ENCODE measurements at regions of chr3 and their contacts with region 1.

Region 1: DNA sequence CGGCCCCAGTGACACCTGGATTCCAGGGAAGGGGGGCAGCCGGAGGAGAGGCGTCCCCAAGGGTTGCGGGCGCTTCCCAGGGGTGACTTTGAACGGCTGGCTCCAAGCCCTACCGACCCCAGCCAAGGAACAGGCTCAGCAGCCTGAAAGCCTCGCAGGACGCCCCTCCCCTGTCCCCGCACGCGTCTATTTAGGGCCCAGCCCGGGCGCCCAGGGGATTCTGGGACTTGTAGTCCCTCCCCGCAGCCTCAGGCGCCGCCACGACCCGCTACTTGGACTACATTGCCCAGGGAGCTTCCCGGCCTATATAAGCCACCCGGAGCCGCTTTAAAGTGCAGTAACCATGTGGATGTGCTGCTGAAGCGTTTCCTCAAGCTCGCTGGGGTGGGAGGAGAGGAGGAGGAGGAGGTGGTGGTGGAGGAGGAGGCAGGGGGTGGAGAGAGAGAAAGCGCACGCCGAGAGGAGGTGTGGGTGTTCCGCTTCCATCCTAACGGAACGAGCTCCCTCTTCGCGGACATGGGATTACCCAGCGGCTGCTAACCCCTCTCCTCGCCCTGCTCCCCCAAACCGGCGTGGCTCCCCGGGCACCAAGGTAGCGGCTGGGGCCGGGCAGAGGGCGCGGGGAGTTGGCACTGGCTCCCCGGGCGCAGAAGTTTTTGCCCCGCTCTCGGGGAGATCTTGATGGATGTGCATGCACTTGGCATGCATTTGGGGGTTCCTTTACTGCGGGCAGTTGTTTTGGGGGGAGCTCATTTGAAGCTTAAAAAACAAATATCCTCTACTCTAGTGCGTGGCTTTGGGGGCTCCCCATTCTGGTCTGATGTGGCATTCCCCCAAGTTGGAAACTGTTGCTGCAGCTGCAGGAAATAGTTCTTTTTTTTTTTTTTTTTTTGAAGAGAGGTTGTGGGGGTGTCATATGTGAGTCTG is at the start of gene ITPR1:
- DNase-seq: peak; percentile 98 to 99
- H3K4me3 ChIP-seq: peak within 1 kb of the TSS; percentile 62 to 88 (median 72)
- H3K27ac ChIP-seq: peak within 1 kb of the TSS; percentile 56; the same call in 1 of the 2 replicates
- H3K4me1 ChIP-seq: peaks cover 0 to 3% (median 0%) of the 10 kb centered on the region in 4 experiments; a peak in 3 of 7 replicates
- H3K27me3 ChIP-seq: peaks cover 0 to 11% (median 5%) of the 10 kb centered on the region in 4 experiments; a peak in 5 of 7 replicates
- CTCF ChIP-seq: no peak
- EP300 ChIP-seq: no peak
- POLR2A ChIP-seq: peak; percentile 100
- RAD21 ChIP-seq: no peak
- total RNA-seq, gene ITPR1: 11.5 and 16.3 TPM in 2 replicates

Region 2: GRCh38 chr3:4447295-4447999 is 45.8 kb before region 1 on chr3:
- CTCF ChIA-PET with region 1: no interaction called
- POLR2A ChIA-PET with region 1: interaction called, 11 read pairs
- DNase-seq: no peak
- H3K4me3 ChIP-seq: peak overlapping the region in 1 of 4 experiments; percentile 18; a peak in 1 of 8 replicates
- H3K27ac ChIP-seq: no peak overlapping the region
- H3K4me1 ChIP-seq: peaks cover 0 to 7% (median 6%) of the 10 kb centered on the region in 4 experiments; a peak in 4 of 7 replicates
- H3K27me3 ChIP-seq: no peaks in the 10 kb centered on the region
- CTCF ChIP-seq: no peak
- EP300 ChIP-seq: no peak
- POLR2A ChIP-seq: no peak
- RAD21 ChIP-seq: no peak

Region 3: DNA sequence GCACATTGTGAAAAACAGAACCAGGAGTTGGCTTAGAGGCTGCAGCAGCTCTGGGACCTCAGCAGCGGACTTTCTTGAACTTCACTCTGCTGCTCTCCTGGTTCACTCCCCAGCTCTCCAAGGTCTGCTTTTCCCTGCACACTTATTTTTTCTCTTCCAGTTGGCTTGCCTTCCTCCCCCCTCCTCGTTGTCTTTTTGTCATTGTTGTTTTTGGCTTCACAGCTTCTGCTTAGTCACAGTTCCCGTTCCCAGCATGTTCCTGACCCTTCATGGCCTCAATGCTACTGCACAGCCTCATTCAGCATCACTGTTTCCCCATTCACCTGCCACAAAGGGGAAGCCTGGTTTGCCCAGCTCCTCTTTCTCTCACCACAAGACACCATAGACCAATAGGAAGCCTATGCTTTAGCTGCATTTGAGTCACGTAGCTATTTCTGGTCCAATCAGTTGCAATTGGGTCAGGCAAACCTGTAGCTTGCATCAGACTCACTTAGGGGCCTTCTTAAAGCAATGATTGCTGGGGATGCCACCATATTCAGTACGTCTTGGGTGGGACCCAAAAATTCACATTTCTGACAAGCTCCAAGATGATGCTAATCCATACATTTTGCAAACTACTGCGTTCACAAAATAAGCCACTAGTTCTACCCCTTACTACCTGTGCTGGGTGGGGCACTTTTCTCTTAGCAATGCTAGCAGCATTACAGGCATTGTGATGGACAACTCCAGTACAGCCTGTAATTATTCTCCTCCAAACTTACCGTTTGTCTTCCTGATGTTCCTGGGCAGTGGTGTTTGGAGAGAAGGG is 18.4 kb before region 1 on chr3:
- CTCF ChIA-PET with region 1: interaction called, 3 read pairs
- POLR2A ChIA-PET with region 1: interaction called, 26 read pairs
- DNase-seq: no peak
- H3K4me3 ChIP-seq: no peak overlapping the region
- H3K27ac ChIP-seq: no peak overlapping the region
- H3K4me1 ChIP-seq: no peaks in the 10 kb centered on the region; a peak in 1 of 7 replicates
- H3K27me3 ChIP-seq: no peaks in the 10 kb centered on the region
- CTCF ChIP-seq: no peak
- EP300 ChIP-seq: no peak
- POLR2A ChIP-seq: no peak
- RAD21 ChIP-seq: no peak

Region 4: GRCh38 chr3:4512895-4513616 is 19.8 kb after region 1 on chr3:
- CTCF ChIA-PET with region 1: interaction called, 3 read pairs
- POLR2A ChIA-PET with region 1: interaction called, 91 read pairs
- DNase-seq: no peak
- H3K4me3 ChIP-seq: no peak overlapping the region
- H3K27ac ChIP-seq: no peak overlapping the region
- H3K4me1 ChIP-seq: peaks cover 5 to 17% (median 11%) of the 10 kb centered on the region in 4 experiments; a peak in 5 of 7 replicates
- H3K27me3 ChIP-seq: no peaks in the 10 kb centered on the region; a peak in 2 of 7 replicates
- CTCF ChIP-seq: no peak
- EP300 ChIP-seq: no peak
- POLR2A ChIP-seq: no peak
- RAD21 ChIP-seq: no peak

Region 5: GRCh38 chr3:4577721-4578120 is 84.4 kb after region 1 on chr3:
- CTCF ChIA-PET with region 1: no interaction called
- POLR2A ChIA-PET with region 1: interaction called, 10 read pairs
- DNase-seq: no peak
- H3K4me3 ChIP-seq: no peak overlapping the region
- H3K27ac ChIP-seq: no peak overlapping the region
- H3K4me1 ChIP-seq: peaks cover 0 to 5% (median 0%) of the 10 kb centered on the region in 4 experiments; a peak in 2 of 7 replicates
- H3K27me3 ChIP-seq: no peaks in the 10 kb centered on the region
- CTCF ChIP-seq: no peak
- EP300 ChIP-seq: no peak
- POLR2A ChIP-seq: no peak
- RAD21 ChIP-seq: no peak